ENCODE measurements at regions of chr4 and their contacts with region 1.

Region 1: DNA sequence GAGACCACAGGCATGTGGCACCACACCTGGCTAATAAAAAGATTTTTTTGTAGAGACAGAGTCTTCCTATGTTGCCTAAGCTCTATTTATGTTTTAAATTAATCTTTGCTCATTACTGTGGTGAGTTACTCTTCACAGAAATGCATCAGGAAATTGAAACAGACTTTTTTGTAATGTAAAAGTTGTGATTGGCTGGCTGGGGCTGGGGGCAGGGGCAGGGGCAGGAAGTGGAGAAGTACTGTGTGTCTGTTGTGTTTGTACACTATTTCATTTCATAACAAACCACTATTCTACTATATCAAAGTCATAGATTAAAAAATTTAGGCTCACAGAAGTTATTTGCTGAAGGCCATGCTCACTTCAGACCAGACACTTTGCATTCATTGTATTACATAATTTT is 19.1 kb upstream of the ABRAXAS1 start:
- H3K4me3 Mint-ChIP-seq: no peak overlapping the region
- H3K27ac Mint-ChIP-seq: no peak overlapping the region
- H3K4me1 Mint-ChIP-seq: peaks cover 9% of the 10 kb centered on the region
- H3K27me3 Mint-ChIP-seq: peaks cover 2% of the 10 kb centered on the region

Region 2: GRCh38 chr4:83748514-83749110 is 244.6 kb after region 1 on chr4:
- intact Hi-C with region 1: no loop called
- H3K4me3 Mint-ChIP-seq: no peak overlapping the region
- H3K27ac Mint-ChIP-seq: no peak overlapping the region
- H3K4me1 Mint-ChIP-seq: no peaks in the 10 kb centered on the region
- H3K27me3 Mint-ChIP-seq: peaks cover 3% of the 10 kb centered on the region

Region 3: GRCh38 chr4:84503495-84504437 is 999.8 kb after region 1 on chr4:
- intact Hi-C with region 1: loop called (anchors 10 kb)
- H3K4me3 Mint-ChIP-seq: no peak overlapping the region
- H3K27ac Mint-ChIP-seq: no peak overlapping the region
- H3K4me1 Mint-ChIP-seq: peaks cover 24% of the 10 kb centered on the region
- H3K27me3 Mint-ChIP-seq: peaks cover 76% of the 10 kb centered on the region

Measured in dendritic cell treated with granulocyte-macrophage colony-stimulating factor and Interleukin-4, amounts not matched to agents 40 ng/mL and 50 ng/mL, for 4 days (primary cell).